ENCODE measurements at regions of chr11 and their contacts with region 1.

Region 1: DNA sequence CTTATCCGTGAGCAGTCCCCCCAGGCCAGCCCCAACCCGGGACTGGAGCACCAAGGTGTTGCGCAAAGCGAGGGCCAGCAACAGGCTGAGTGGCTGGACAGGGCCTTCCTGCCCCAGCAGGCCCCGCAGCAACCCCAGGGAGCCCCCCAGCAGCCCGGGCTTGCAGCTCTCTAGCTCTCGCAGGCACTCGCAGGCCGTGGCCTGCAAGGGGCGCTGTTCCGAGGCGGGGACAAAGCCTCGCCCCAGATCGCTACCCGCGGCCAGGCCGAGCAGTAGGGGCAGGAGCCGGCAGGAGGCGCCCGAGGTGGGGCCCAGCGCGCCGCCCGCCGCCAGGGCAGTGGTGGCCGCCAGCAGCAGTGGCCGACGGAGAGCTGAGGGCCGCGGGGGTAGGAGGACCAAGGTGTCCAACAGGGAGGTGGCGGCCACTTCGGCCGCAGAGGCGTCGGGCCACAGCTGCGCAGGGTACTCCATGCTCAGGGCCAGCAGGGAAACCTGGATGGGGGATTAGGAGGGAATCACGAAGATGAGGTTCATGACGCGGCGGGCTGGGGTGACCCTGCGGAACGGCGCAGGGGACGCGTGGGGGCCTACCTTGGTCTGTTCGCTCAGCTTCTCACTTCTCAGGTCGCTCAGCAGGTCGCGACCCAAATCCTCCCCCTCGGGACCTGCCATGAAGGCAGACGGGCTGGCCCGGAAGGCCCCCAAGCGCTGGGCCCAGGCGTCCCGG is 762 bp downstream of the AP5B1 start:
- DNase-seq: peak; percentile 52
- H3K27ac ChIP-seq: peak overlapping the region; percentile 76
- CTCF ChIP-seq: peak; percentile 95

Region 2: DNA sequence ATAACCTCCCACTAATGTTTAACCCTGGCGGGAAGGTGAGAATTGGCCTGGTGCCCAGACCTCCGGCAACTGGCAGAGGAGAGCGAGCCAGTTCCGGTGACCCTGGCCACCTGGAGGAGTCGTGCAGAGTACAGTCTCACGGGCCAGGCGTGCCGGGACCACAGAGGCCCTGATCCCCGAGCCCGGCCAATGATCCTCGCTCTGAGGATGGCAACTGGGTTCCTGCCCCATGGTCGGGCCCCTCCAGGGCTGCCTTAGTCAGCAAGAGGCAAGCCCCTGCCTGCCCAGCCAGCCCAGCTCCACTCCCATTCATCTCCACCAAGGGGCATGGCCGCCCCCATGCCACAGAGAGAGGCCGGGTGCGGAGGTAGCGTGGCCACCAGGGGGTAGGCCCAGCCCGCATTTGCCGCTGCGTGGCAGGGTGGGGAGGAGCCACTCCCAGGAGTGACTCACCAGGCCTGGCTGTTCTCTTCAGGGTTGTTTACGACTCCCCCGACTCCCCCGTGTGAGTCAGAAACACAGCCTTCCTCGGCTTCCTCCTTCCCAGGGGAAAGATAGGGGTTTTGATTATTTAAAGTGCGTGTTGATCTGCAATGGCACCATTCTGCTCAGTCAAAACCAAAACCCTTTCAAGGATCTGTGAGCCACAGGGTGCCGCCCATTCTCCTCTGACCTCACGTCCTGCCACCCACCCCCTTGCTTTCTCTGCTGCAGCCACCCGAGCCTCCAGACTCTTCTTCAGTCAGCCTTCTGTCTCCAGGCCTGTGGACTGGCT is 397.8 kb before region 1 on chr11 and contains the start of gene SLC25A45:
- CTCF ChIA-PET with region 1: no interaction called
- POLR2A ChIA-PET with region 1: interaction called, 18 read pairs
- DNase-seq: peak; percentile 94
- H3K27ac ChIP-seq: peak within 1 kb of the TSS; percentile 100
- CTCF ChIP-seq: peak; percentile 78

Region 3: GRCh38 chr11:65429724-65430405 is 350.1 kb before region 1 on chr11:
- CTCF ChIA-PET with region 1: no interaction called
- POLR2A ChIA-PET with region 1: no interaction called
- DNase-seq: no peak
- H3K27ac ChIP-seq: peak overlapping the region; percentile 85
- CTCF ChIP-seq: no peak

Region 4: DNA sequence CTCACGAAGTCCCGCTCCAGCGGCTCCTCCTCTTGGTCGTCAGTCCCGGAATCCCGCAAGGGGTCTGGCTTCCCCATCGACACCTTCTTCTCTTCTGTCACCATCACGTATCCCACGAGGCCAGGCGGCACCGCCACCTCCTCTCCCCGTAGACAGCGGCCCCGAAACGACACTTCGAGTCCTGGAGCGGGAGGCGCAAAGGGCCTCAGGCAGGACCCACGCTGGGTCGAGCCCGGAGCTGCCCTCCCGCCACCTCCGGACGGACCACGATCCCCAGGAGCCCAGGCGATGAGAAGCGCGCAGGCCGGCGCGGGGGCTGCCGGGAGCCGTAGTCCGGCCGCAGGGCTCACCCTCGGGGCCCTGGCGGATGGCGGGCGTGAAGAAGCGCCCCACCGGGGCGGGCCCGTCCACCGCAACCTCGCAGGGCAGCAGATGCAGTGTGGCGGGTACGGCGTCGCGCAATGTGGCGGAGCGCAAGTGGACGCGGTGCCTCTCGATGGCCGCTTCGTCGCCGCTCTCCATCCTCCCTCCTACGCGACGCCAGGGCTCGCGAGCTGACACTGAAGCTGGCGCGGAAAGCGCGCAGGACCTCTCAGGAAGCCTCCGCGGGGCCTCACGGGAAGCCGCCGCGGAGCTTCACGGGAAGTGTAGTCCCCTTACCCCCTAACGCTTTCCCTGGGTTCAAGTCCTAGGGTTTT is 59.6 kb before region 1 on chr11 and contains the start of gene RNASEH2C:
- CTCF ChIA-PET with region 1: interaction called, 14 read pairs
- POLR2A ChIA-PET with region 1: interaction called, 3 read pairs
- DNase-seq: peak; percentile 70
- H3K27ac ChIP-seq: peak within 1 kb of the TSS; percentile 86
- CTCF ChIP-seq: no peak

Region 5: DNA sequence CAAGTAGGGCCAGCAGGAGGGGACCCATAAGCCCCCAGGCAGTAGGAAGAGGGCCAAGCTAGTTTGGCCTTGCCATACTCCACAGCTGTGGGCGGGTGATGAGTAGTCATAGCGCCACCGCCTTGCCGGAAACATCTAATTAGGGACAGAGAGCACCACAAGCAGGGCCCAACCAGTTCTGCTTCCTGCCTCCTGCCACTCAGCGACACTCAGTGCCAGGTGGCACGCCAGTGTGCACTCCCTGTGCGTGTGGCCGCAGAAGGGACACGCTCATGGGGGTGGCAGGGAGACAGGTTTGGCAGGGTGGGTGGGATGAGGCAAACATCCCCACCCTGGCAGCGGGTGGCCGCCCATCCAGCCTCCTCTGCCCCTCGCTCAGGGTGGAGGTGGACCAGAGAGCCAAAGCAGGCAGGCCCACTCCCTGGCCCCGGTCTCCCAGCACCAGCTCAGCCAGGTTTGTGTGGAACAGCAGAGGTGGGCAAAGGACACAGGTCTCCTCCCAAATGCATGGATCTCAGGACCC is 11.7 kb after region 1 on chr11:
- CTCF ChIA-PET with region 1: interaction called, 42 read pairs
- POLR2A ChIA-PET with region 1: interaction called, 4 read pairs
- DNase-seq: no peak
- H3K27ac ChIP-seq: no peak overlapping the region
- CTCF ChIP-seq: no peak

Region 6: DNA sequence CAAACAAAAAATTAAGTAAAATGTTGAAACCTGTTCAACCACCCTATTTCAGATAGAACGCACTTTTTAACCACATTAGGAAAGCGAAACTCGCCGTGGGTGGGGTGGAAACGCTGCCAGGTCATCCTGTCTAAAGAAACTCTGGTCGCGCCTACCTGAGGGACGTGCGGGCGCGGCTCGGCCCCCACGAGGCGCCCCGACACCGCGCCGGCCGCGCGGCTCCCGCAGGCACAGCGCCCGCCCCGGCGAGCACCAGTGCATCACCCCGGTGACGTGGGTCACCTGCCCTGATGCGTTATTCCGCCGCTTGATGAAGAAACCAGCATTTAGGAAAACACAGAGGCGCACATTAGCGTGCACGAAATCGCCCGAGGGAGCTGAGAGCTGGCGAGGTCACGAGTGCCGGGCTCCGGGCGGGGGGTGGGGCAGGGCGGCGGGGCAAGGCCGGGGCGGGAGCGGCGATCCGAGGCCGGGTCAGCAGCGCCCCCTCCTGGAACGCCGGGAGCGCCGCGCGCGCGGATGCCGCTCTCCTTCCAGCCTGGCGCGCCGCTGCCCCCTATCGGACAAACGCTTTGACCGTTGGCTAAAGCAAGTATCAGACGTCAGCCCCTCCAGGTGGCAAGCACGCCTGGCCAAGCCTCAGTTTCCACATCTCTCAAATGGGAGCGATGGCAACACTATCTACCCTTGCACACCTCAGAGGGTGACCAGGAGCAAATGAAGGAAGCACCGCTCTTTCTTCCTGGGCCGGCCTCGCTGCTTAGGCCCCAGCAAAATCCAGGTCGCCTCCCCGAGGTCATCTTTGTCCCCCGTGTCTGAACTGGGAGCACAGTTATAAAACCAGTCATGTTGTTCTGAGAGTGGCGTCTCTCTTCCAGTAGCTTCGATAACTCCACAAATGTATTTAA is 38.1 kb after region 1 on chr11:
- CTCF ChIA-PET with region 1: interaction called, 37 read pairs
- POLR2A ChIA-PET with region 1: no interaction called
- DNase-seq: peak; percentile 86
- H3K27ac ChIP-seq: peak overlapping the region; percentile 81
- CTCF ChIP-seq: peak; percentile 99

Region 7: GRCh38 chr11:65900125-65900898 is 120.3 kb after region 1 on chr11 and contains the start of gene FOSL1:
- CTCF ChIA-PET with region 1: no interaction called
- POLR2A ChIA-PET with region 1: no interaction called
- DNase-seq: peak; percentile 94
- H3K27ac ChIP-seq: peak within 1 kb of the TSS; percentile 95
- CTCF ChIP-seq: no peak